ENCODE measurements at regions of chr19 and their contacts with region 1.

Region 1: DNA sequence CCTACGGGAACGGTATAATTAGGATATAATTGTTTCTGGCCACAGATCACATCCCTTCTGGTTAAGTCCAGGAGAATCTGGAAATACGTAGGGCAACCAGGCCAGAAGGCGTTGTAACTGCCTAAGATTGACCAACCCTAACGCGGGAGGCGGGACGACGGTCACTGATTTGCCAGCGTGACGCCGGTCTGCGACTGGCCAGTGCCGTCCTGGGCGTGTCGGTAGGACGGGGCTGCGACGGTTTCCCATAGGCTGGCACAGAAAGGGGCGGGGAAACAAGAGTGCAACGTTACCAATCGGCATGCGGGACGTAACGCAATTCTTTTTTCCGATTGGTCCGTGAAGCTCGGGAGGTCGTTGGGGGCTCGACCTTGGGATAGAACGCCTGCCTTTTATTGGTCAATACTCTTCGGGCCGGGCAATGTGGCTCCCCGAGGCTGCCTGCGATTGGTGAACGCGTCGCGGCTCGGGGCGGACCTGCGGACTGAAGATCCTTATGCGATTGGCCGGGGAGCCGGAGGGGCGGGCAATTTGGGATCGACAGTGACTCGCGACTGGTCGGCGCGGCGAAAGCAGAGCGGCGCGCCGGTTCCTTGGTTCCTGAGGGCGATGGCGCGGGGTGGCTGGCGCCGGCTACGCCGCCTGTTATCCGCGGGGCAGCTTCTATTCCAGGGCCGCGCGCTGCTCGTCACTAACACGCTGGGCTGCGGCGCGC is at the start of gene MPV17L2:
- DNase-seq: peak; percentile 99 to 100
- ATAC-seq: peak; percentile 93 to 98 (median 96)
- H3K4me3 ChIP-seq: peak within 1 kb of the TSS; percentile 65 to 98 (median 82)
- H3K27ac ChIP-seq: peak within 1 kb of the TSS; percentile 69 to 97 (median 94)
- H3K4me1 ChIP-seq: peaks cover 8 to 34% (median 19%) of the 10 kb centered on the region in 9 donors
- H3K27me3 ChIP-seq: no peaks in the 10 kb centered on the region
- CTCF ChIP-seq: no peak
- total RNA-seq, gene MPV17L2: 10.6 to 16.5 (median 14.5) TPM

Region 2: GRCh38 chr19:18322759-18323460 is 130.1 kb after region 1 on chr19 and contains the start of gene LSM4:
- intact Hi-C with region 1: loop called in 1 of 10 experiments (anchors 10 kb)
- DNase-seq: peak; percentile 98
- ATAC-seq: peak; percentile 96 to 98 (median 97)
- H3K4me3 ChIP-seq: peak within 1 kb of the TSS; percentile 58 to 92 (median 78)
- H3K27ac ChIP-seq: peak within 1 kb of the TSS; percentile 63 to 98 (median 92)
- H3K4me1 ChIP-seq: peaks cover 0 to 62% (median 57%) of the 10 kb centered on the region in 9 donors
- H3K27me3 ChIP-seq: no peaks in the 10 kb centered on the region
- CTCF ChIP-seq: peak in 4 of 9 donors; percentile 12 to 42 (median 28)
- total RNA-seq, gene LSM4: 73.2 to 114 (median 93.3) TPM

Region 3: GRCh38 chr19:18809150-18809868 is 616.5 kb after region 1 on chr19:
- intact Hi-C with region 1: loop called in 1 of 10 experiments (anchors 5 kb)
- DNase-seq: peak in 1 of 2 donors; percentile 49
- ATAC-seq: peak; percentile 42 to 85 (median 68)
- H3K4me3 ChIP-seq: no peak overlapping the region
- H3K27ac ChIP-seq: peak overlapping the region in 3 of 10 donors; percentile 20 to 58 (median 20)
- H3K4me1 ChIP-seq: peaks cover 0 to 12% (median 0%) of the 10 kb centered on the region in 9 donors
- H3K27me3 ChIP-seq: peaks cover 0 to 10% (median 0%) of the 10 kb centered on the region in 7 donors
- CTCF ChIP-seq: no peak